ENCODE measurements at regions of chr7 and their contacts with region 1.

Region 1: GRCh38 chr7:45136106-45137060 is 21.2 kb upstream of the RAMP3 start:
- DNase-seq: peak; percentile 35 to 74 (median 59)
- H3K4me3 ChIP-seq: no peak overlapping the region
- H3K4me3 Mint-ChIP-seq: peak overlapping the region in 1 of 7 donors; percentile 17
- H3K27ac ChIP-seq: no peak overlapping the region
- H3K27ac Mint-ChIP-seq: peak overlapping the region in 5 of 8 donors; percentile 13 to 70 (median 33)
- H3K4me1 ChIP-seq: peaks cover 6% of the 10 kb centered on the region
- H3K4me1 Mint-ChIP-seq: peaks cover 3 to 9% (median 4%) of the 10 kb centered on the region in 3 donors
- H3K27me3 ChIP-seq: no peaks in the 10 kb centered on the region
- H3K27me3 Mint-ChIP-seq: no peaks in the 10 kb centered on the region

Region 2: DNA sequence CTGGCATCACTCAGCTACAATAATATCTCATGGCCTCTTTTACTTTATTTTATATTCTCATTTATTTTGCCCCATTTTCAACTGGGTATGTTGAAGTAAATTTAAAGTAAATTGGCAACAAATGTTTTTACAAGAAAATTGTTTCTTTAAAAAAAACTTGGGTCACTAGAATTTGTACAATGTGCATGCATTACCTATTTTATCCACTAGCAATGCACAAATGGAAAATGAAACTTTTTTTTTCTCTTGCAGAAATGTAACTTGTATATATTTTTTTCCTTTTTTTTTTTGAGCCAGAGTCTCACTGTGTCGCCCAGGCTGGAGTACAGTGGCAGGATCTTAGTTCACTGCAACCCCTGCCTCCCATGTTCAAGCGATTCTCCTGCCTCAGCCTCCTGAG is 278.2 kb before region 1 on chr7:
- CTCF ChIA-PET with region 1: interaction called, 51 read pairs
- POLR2A ChIA-PET with region 1: no interaction called
- DNase-seq: no peak
- H3K4me3 ChIP-seq: no peak overlapping the region
- H3K4me3 Mint-ChIP-seq: no peak overlapping the region
- H3K27ac ChIP-seq: no peak overlapping the region
- H3K27ac Mint-ChIP-seq: no peak overlapping the region
- H3K4me1 ChIP-seq: no peaks in the 10 kb centered on the region
- H3K4me1 Mint-ChIP-seq: peaks cover 3 to 6% (median 5%) of the 10 kb centered on the region in 3 donors
- H3K27me3 ChIP-seq: no peaks in the 10 kb centered on the region
- H3K27me3 Mint-ChIP-seq: peaks cover 0 to 12% of the 10 kb centered on the region in 2 donors

Region 3: DNA sequence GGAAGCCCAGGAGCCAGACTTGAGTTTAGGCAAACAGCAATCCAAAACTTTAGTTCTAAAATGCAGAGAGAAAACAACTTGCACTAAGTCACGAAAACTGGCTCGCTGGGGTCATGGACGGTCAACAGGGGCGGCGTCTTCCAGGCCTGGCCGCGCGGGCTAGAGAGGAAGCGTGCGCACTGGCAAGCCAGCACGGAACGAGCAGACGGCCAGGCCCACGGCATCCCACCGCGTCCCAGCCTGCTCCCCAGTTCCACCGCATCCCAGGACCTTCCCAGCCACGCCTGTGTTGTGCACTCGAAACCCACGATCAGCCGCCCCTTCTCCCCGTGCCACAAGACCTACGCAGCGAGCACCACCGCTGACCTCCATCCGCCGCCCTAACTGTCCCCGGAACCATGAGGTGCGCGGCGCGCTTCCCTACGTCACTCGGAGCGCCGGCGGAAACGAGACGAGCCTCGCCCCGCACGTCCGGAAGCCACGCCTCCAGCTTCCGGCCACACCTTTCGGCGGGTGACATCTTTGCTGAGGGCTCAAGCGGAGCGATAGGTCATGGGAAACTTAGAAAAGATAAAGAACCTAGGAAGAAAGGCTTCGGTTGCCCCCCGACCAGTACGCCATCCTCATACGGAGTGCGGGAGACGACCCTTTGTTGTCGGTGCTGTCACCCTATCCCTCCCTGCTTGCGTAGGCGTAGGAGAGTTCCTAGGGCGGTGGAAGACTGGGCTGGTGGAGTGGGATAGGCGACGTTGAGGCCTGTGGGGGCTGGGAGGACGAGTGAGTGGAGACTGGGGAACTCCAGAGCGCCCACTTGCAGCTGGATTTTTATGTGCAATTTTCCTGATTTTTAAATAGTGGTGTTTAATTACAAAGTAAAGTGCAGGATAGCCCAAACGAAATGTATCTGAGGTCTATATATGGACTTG is 24.8 kb before region 1 on chr7 and contains the start of gene TBRG4:
- CTCF ChIA-PET with region 1: interaction called, 12 read pairs
- POLR2A ChIA-PET with region 1: interaction called, 4 read pairs
- DNase-seq: peak; percentile 89 to 95 (median 92)
- H3K4me3 ChIP-seq: peak within 1 kb of the TSS; percentile 87
- H3K4me3 Mint-ChIP-seq: peak within 1 kb of the TSS; percentile 93 to 98 (median 95)
- H3K27ac ChIP-seq: peak within 1 kb of the TSS; percentile 95
- H3K27ac Mint-ChIP-seq: peak within 1 kb of the TSS; percentile 95 to 100 (median 98)
- H3K4me1 ChIP-seq: peaks cover 52% of the 10 kb centered on the region
- H3K4me1 Mint-ChIP-seq: peaks cover 44 to 56% (median 48%) of the 10 kb centered on the region in 3 donors
- H3K27me3 ChIP-seq: no peaks in the 10 kb centered on the region
- H3K27me3 Mint-ChIP-seq: peaks cover 6 to 8% of the 10 kb centered on the region in 2 donors
- total RNA-seq, gene TBRG4: 198 to 203 TPM

Region 4: GRCh38 chr7:45122975-45123860 is 13.2 kb before region 1 on chr7:
- CTCF ChIA-PET with region 1: interaction called, 18 read pairs
- POLR2A ChIA-PET with region 1: no interaction called
- DNase-seq: peak in 1 of 5 donors; percentile 18
- H3K4me3 ChIP-seq: peak overlapping the region; percentile 30
- H3K4me3 Mint-ChIP-seq: peak overlapping the region in 6 of 7 donors; percentile 52 to 80 (median 64)
- H3K27ac ChIP-seq: no peak overlapping the region
- H3K27ac Mint-ChIP-seq: peak overlapping the region; percentile 76 to 97 (median 92)
- H3K4me1 ChIP-seq: peaks cover 23% of the 10 kb centered on the region
- H3K4me1 Mint-ChIP-seq: peaks cover 15 to 17% (median 17%) of the 10 kb centered on the region in 3 donors
- H3K27me3 ChIP-seq: no peaks in the 10 kb centered on the region
- H3K27me3 Mint-ChIP-seq: peaks cover 0 to 5% of the 10 kb centered on the region in 2 donors

Measured in CD8-positive, alpha-beta memory T cell (primary cell).